T-cell (primary cell): ENCODE measurements at regions of chr3 and their contacts with region 1.

Region 1: DNA sequence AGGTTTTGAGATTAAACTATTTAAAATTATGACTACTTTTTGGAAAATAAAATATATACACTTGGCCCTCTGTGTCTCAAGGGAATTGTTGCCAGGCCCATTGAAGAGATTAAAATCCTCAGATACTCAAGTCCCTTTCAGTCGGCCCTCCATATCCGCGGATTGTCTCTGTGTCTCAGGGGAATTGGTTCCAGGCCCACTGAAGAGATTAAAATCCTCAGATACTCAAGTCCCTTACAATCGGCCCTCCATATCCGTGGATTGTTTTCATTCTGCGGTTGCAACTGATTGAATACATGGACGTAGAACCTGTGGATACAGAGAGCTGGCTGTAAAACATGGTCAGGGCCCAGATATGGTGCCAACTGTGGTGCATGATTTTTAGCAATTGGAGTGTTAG is 15.7 kb upstream of the LRCH3 start:
- DNase-seq: no peak
- ATAC-seq: no peak
- H3K4me3 ChIP-seq: no peak overlapping the region
- H3K4me3 Mint-ChIP-seq: no peak overlapping the region
- H3K27ac ChIP-seq: no peak overlapping the region
- H3K27ac Mint-ChIP-seq: no peak overlapping the region
- H3K4me1 ChIP-seq: no peaks in the 10 kb centered on the region
- H3K4me1 Mint-ChIP-seq: no peaks in the 10 kb centered on the region
- H3K27me3 ChIP-seq: no peaks in the 10 kb centered on the region
- H3K27me3 Mint-ChIP-seq: no peaks in the 10 kb centered on the region

Region 2: DNA sequence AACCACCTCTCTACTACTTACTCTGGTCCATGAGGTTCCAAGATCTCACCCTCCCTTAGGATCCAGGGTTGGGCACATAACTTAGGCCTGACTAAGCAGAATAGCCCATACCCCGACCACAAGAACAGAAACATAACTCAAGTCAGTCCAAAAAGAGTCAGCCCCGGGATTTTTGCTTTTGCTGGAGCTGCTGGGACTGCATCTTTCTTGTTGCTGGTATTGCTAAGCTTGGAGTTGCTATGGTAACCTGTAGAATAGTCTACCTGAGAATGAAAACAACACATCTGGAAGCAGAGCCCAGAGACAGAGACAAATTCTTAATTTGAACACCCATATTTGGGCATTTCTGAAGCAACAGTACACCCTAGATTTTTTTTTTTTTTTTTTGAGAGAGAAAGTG is 45.1 kb before region 1 on chr3:
- CTCF ChIA-PET with region 1: no interaction called
- POLR2A ChIA-PET with region 1: interaction called in 1 of 2 experiments, 12 read pairs
- DNase-seq: peak in 1 of 35 experiments; percentile 25
- ATAC-seq: peak in 1 of 4 experiments; percentile 74
- H3K4me3 ChIP-seq: no peak overlapping the region
- H3K4me3 Mint-ChIP-seq: no peak overlapping the region
- H3K27ac ChIP-seq: no peak overlapping the region
- H3K27ac Mint-ChIP-seq: no peak overlapping the region
- H3K4me1 ChIP-seq: peaks cover 0 to 13% of the 10 kb centered on the region in 2 experiments
- H3K4me1 Mint-ChIP-seq: peaks cover 42 to 54% (median 49%) of the 10 kb centered on the region in 3 donors
- H3K27me3 ChIP-seq: no peaks in the 10 kb centered on the region
- H3K27me3 Mint-ChIP-seq: no peaks in the 10 kb centered on the region

Region 3: GRCh38 chr3:197835509-197835908 is 60.2 kb after region 1 on chr3:
- CTCF ChIA-PET with region 1: no interaction called
- POLR2A ChIA-PET with region 1: interaction called in 1 of 2 experiments, 10 read pairs
- DNase-seq: no peak
- ATAC-seq: no peak
- H3K4me3 ChIP-seq: no peak overlapping the region
- H3K4me3 Mint-ChIP-seq: no peak overlapping the region
- H3K27ac ChIP-seq: no peak overlapping the region
- H3K27ac Mint-ChIP-seq: peak overlapping the region in 1 of 2 donors; percentile 11
- H3K4me1 ChIP-seq: no peaks in the 10 kb centered on the region
- H3K4me1 Mint-ChIP-seq: peaks cover 0 to 2% (median 0%) of the 10 kb centered on the region in 3 donors
- H3K27me3 ChIP-seq: no peaks in the 10 kb centered on the region
- H3K27me3 Mint-ChIP-seq: no peaks in the 10 kb centered on the region